Activated naive CD4-positive, alpha-beta T cell treated with anti-CD3 and anti-CD28 coated beads for 36 hours (primary cell): ENCODE measurements at regions of chr4 and their contacts with region 1.

Region 1: DNA sequence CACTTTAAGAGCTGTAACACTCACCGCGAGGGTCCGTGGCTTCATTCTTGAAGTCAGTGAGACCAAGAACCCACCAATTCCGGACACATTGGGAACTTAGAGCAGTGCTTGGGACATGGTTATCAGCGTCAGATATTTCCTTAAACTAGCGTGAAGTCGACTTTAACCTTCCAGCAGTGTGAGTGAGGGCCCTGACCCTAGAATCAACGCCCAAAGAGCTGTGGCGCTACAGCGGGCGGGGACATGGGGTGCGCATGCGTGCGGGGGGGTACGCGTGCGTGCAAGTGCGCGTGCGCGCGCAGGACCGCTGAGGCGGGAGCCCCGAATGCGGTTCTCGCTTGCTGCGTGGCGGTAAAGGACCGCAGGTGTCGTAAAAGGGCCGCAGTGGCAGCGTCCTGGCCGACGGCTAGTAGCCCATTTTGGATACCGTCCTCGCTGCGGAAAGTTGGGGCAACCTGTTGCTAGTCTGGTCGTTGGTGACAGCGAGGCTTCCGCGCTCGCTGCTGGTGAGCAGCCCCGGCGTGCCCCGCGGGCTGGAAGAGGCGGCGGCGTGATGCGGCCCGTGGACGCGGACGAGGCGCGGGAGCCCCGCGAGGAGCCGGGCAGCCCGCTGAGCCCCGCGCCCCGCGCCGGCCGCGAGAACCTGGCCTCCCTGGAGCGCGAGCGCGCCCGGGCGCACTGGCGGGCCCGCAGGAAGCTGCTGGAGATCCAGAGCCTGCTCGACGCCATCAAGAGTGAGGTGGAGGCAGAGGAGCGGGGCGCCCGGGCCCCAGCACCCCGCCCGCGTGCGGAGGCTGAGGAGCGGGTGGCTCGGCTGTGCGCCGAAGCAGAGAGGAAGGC is 19.8 kb upstream of the S100P start:
- DNase-seq: peak; percentile 96
- H3K4me3 Mint-ChIP-seq: peak overlapping the region; percentile 96
- H3K27ac Mint-ChIP-seq: peak overlapping the region; percentile 98
- H3K4me1 Mint-ChIP-seq: peaks cover 45% of the 10 kb centered on the region
- H3K27me3 Mint-ChIP-seq: no peaks in the 10 kb centered on the region

Region 2: DNA sequence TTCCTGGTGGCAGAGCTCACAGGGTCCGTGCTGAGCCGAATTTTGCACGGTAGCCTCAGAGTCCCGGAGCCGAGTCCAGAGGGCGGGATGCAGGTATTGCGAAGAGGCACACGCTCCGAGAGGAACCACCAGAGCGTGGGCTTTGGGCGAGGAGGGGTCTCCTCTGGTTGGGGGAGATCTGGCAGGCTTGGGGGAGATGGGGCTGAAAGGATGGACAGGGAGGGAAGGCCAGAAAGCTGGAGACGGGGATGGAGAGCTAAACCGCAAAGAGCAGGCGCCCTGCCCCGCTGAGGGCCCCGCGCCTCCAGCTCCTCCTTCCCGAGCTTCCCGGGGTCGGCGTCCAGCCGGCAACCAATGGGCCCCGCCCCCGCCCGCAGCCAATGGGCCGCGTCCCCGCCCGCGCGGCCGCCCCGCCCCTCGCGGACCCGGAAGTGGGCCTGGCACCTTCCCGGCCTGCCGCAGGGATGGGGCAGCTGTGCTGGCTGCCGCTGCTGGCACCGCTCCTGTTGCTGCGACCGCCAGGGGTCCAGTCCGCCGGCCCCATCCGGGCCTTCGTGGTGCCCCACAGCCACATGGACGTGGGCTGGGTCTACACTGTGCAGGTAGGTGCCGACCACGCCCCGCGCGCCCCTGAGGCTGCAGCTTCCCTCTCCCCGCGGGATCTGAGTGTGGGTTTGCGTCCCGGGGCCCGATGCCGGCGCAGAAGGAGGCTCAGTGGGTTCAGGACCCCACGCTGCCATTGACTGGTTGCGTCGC is 99.0 kb before region 1 on chr4 and contains the start of gene MAN2B2:
- CTCF ChIA-PET with region 1: interaction called, 4 read pairs
- intact Hi-C with region 1: loop called (anchors 1 kb)
- DNase-seq: peak; percentile 83
- H3K4me3 Mint-ChIP-seq: peak within 1 kb of the TSS; percentile 84
- H3K27ac Mint-ChIP-seq: peak within 1 kb of the TSS; percentile 60
- H3K4me1 Mint-ChIP-seq: peaks cover 4% of the 10 kb centered on the region
- H3K27me3 Mint-ChIP-seq: no peaks in the 10 kb centered on the region
- total RNA-seq, gene MAN2B2: 12.7 to 12.8 TPM

Region 3: DNA sequence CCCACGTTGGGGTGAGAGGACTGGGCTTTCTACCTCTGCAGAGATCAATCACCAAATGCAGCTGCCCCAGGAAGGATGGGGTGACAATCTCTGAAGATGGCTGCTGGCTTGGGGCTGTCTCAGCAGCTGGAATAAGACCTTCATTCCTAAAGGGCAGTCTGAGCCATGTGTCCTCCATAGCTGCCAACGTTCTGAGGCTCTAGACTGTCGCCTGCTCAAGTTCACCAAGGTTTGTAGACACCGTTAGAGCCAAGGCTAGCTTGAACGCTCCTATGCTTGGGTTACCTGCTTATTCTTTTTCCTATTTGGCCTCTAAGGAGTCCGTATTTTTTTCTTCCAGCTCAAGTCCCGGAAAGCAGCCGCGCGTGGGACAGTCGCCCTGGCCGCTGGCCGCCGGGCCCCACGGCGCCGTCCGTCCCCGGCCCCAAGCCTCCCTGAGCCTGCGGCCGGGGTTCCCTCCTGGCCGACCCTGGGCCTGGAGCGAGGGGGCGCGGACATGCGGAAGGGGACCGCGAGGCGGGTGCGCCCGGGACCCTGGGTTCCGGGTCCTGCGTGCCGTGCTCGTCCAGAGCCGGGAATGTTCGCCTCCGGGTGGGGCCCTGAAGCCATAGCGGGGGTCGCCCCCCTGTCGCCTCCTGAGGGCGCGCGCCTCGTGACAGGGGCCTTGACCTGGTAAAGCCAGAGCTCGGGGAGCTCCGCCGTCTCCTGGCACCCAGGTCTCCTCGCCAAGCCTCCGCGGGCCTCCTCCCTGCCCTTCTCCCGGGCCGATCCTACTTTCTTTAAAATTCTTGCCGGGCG is 10.1 kb before region 1 on chr4:
- CTCF ChIA-PET with region 1: interaction called, 27 read pairs
- intact Hi-C with region 1: no loop called
- DNase-seq: no peak
- H3K4me3 Mint-ChIP-seq: peak overlapping the region; percentile 17
- H3K27ac Mint-ChIP-seq: no peak overlapping the region
- H3K4me1 Mint-ChIP-seq: peaks cover 11% of the 10 kb centered on the region
- H3K27me3 Mint-ChIP-seq: no peaks in the 10 kb centered on the region

Region 4: DNA sequence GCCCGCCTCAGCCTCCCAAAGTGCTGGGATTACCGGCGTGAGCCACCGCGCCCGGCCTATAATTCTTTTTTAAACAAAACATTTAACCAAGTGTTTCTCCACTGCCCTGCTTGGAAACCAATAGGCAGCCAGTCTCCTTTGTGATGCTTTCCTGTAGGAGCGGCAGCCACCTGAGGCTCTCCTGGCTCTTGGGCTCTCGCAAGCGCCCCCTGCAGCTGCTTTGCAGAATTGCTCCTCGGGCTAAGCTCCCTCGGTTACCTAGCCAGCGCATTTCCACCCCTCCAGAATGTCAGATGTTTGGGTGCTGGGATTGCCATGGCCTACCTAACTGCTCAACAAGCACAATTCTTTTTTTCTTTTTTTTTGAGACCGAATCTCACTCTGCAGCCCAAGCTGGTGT is 27.5 kb after region 1 on chr4:
- CTCF ChIA-PET with region 1: interaction called, 96 read pairs
- intact Hi-C with region 1: loop called (anchors 1 kb)
- DNase-seq: peak; percentile 60
- H3K4me3 Mint-ChIP-seq: no peak overlapping the region
- H3K27ac Mint-ChIP-seq: no peak overlapping the region
- H3K4me1 Mint-ChIP-seq: peaks cover 73% of the 10 kb centered on the region
- H3K27me3 Mint-ChIP-seq: no peaks in the 10 kb centered on the region

Region 5: GRCh38 chr4:6783053-6783981 is 109.4 kb after region 1 on chr4:
- CTCF ChIA-PET with region 1: no interaction called
- intact Hi-C with region 1: loop called (anchors 1 kb)
- DNase-seq: peak; percentile 91
- H3K4me3 Mint-ChIP-seq: peak overlapping the region; percentile 81
- H3K27ac Mint-ChIP-seq: peak overlapping the region; percentile 78
- H3K4me1 Mint-ChIP-seq: peaks cover 51% of the 10 kb centered on the region
- H3K27me3 Mint-ChIP-seq: no peaks in the 10 kb centered on the region

Region 6: DNA sequence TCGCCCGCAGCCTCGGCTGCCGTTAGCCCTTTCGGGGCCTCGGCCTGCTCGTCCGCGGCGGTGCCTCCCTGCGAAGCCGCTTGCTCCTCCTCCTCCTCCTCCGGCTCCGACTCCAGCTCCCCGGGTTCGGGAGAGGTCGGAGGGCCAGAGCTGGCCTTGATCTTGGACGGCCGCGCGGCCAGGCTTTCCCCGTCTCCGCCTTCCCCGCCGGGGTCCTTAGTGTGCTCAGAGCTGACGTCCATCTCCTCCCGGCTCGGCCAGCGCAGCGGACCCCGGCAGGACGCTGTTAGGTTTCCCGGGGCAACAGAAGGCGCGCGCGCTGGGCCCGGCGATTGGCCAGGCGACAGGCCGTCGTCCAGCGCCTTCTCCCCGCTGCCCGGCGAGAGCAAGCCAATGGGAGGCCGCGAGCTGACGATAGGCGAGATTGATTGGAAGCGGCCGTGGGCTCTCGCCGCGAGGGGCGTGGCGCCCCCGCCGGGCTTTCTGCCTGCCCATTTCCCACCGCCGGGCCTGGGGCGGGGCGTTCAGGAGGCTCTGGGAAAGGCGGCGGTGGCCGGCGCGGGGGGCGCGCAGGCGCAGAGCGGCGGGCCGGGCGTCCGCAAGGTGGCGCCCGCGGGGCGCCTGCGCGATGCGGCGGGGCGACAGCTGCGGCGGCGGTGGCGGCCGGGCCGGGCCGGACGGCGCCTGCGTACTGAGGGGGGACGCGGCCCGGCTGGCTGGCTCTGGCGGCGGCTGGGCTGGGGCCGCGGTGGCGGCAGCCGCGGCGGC is 369.0 kb after region 1 on chr4 and contains the start of gene TADA2B:
- CTCF ChIA-PET with region 1: interaction called, 3 read pairs
- intact Hi-C with region 1: loop called (anchors 1 kb)
- DNase-seq: peak; percentile 91
- H3K4me3 Mint-ChIP-seq: peak within 1 kb of the TSS; percentile 89
- H3K27ac Mint-ChIP-seq: peak within 1 kb of the TSS; percentile 46
- H3K4me1 Mint-ChIP-seq: peaks cover 43% of the 10 kb centered on the region
- H3K27me3 Mint-ChIP-seq: no peaks in the 10 kb centered on the region
- total RNA-seq, gene TADA2B: 8.2 to 9.9 TPM